ENCODE measurements at regions of chr2 and their contacts with region 1.

Region 1: GRCh38 chr2:45072064-45072861 is 63.0 kb upstream of the SIX2 start:
- DNase-seq: no peak
- H3K4me3 ChIP-seq: no peak overlapping the region
- H3K27ac ChIP-seq: no peak overlapping the region
- H3K4me1 ChIP-seq: peaks cover 20% of the 10 kb centered on the region
- H3K27me3 ChIP-seq: peaks cover 17% of the 10 kb centered on the region
- CTCF ChIP-seq: no peak

Region 2: DNA sequence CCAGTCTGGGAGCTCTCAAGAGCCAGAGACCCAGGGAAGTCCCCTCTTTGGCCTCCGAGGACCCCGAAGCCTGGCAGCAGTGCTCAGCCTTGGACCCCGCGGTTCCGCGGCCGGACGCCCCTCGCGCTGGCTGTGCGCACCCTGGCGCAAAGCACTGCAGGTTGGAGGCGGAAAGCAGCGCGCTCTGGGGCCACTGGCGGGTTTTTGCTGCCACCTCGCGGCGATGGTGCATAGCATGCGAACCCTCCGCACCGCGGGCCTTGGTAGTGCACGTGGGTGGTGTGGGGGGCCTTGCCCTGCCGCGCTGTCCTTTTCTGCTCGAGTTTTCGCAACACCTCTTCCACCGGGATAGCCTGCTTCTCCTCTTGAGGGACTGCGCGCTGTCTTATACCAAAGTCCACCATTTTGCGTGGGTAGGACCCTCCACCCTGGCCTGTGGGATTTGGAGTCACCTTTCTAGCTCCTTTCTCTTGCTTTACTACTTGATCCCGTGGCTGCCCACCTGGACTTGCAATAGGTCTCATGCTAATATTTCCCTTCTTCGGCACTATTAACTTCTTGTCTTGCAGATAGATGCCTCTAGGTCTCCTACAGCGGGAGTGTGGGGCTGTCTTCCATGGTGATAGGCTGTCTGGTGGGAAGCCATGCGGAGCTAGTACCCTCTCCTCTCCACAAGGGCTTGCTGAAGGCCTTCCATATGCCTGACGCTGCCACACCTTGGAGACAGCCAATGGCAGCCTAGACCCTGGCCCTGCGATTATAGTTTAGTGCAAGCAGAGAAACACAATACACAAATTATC is 116.5 kb before region 1 on chr2:
- CTCF ChIA-PET with region 1: no interaction called
- POLR2A ChIA-PET with region 1: no interaction called
- intact Hi-C with region 1: no loop called
- DNase-seq: peak; percentile 83
- H3K4me3 ChIP-seq: peak overlapping the region; percentile 33
- H3K27ac ChIP-seq: no peak overlapping the region
- H3K4me1 ChIP-seq: no peaks in the 10 kb centered on the region
- H3K27me3 ChIP-seq: peaks cover 37% of the 10 kb centered on the region
- CTCF ChIP-seq: peak; percentile 88

Region 3: GRCh38 chr2:45089554-45090261 is 17.4 kb after region 1 on chr2:
- CTCF ChIA-PET with region 1: no interaction called
- POLR2A ChIA-PET with region 1: no interaction called
- intact Hi-C with region 1: loop called (anchors 2 kb)
- DNase-seq: no peak
- H3K4me3 ChIP-seq: no peak overlapping the region
- H3K27ac ChIP-seq: no peak overlapping the region
- H3K4me1 ChIP-seq: no peaks in the 10 kb centered on the region
- H3K27me3 ChIP-seq: peaks cover 14% of the 10 kb centered on the region
- CTCF ChIP-seq: no peak